Naive thymus-derived CD4-positive, alpha-beta T cell (primary cell): ENCODE measurements at regions of chr15 and their contacts with region 1.

Region 1: GRCh38 chr15:73697033-73697467 is 12.9 kb downstream of the CD276 start:
- DNase-seq: peak; percentile 34 to 80 (median 67)
- ATAC-seq: peak; percentile 93
- H3K4me3 ChIP-seq: no peak overlapping the region
- H3K4me3 Mint-ChIP-seq: peak overlapping the region in 8 of 10 donors; percentile 10 to 61 (median 44)
- H3K27ac ChIP-seq: no peak overlapping the region
- H3K27ac Mint-ChIP-seq: peak overlapping the region in 1 of 9 donors; percentile 74
- H3K4me1 ChIP-seq: peaks cover 8 to 18% of the 10 kb centered on the region in 2 donors
- H3K4me1 Mint-ChIP-seq: peaks cover 13 to 53% (median 18%) of the 10 kb centered on the region in 7 donors
- H3K27me3 ChIP-seq: peaks cover 3 to 8% of the 10 kb centered on the region in 2 donors
- H3K27me3 Mint-ChIP-seq: peaks cover 54 to 69% (median 65%) of the 10 kb centered on the region in 5 donors

Region 2: DNA sequence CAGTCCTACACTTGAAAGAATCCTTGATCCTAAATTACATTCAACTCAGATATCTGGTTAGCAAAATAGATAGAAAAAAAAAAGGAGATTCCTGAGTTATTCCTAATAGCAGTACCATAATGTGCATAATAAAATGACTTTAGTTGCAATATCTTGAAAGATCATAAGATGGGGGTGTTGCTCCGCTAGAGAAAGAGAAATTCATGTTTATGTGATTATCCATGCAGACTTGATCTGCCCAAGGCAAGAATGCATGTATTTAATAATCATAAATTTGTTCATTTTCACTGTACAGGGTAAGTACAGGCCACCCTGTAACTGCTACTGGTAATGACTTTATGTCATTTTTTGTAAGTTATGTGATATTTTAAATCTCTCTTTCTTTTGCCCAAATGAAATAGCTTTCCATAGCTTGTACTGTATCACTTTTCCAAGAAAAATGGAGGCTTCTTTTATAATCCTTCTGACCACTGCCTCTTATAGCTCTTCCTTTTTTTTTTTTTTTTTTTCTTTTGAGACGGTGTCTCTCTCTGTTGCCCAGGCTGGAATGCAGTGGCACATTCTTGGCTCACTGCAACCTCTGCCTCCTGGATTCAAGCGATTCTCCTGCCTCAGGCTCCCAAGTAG is 412.8 kb before region 1 on chr15:
- CTCF ChIA-PET with region 1: no interaction called
- POLR2A ChIA-PET with region 1: no interaction called
- intact Hi-C with region 1: loop called in 1 of 2 experiments (anchors 10 kb)
- DNase-seq: no peak
- ATAC-seq: no peak
- H3K4me3 ChIP-seq: no peak overlapping the region
- H3K4me3 Mint-ChIP-seq: no peak overlapping the region
- H3K27ac ChIP-seq: no peak overlapping the region
- H3K27ac Mint-ChIP-seq: no peak overlapping the region
- H3K4me1 ChIP-seq: no peaks in the 10 kb centered on the region
- H3K4me1 Mint-ChIP-seq: peaks cover 0 to 2% (median 0%) of the 10 kb centered on the region in 7 donors
- H3K27me3 ChIP-seq: no peaks in the 10 kb centered on the region
- H3K27me3 Mint-ChIP-seq: no peaks in the 10 kb centered on the region

Region 3: GRCh38 chr15:73560501-73561117 is 136.4 kb before region 1 on chr15:
- CTCF ChIA-PET with region 1: interaction called, 4 read pairs
- POLR2A ChIA-PET with region 1: no interaction called
- intact Hi-C with region 1: loop called (anchors 1 kb)
- DNase-seq: peak in 6 of 9 donors; percentile 14 to 49 (median 36)
- ATAC-seq: peak; percentile 76
- H3K4me3 ChIP-seq: no peak overlapping the region
- H3K4me3 Mint-ChIP-seq: no peak overlapping the region
- H3K27ac ChIP-seq: no peak overlapping the region
- H3K27ac Mint-ChIP-seq: peak overlapping the region in 1 of 9 donors; percentile 56
- H3K4me1 ChIP-seq: no peaks in the 10 kb centered on the region
- H3K4me1 Mint-ChIP-seq: peaks cover 0 to 8% (median 0%) of the 10 kb centered on the region in 7 donors
- H3K27me3 ChIP-seq: no peaks in the 10 kb centered on the region
- H3K27me3 Mint-ChIP-seq: no peaks in the 10 kb centered on the region

Region 4: DNA sequence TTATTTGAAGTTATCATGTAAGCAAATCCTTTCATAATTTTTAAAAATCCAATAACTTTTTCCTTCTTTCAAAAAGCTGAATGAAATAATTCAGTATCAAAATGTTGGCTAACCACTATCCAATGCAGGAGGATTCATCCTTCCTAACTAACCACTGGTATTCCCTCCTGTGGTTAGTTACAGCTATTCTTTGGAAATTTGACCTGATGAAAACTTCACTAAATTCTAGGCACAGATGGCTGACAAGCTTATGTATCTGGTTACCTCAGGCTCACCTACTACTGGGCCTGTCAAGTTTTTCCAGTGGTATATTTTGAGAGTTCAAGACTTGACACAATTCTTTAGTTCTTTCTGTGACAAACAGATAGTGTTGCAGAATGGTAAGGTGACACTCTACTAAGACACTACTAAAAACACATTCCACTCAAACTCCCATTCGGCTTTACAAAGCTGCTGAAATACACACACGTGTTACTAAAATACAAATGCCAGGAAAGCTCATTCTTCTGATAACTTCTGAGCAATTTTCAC is 79.7 kb before region 1 on chr15:
- CTCF ChIA-PET with region 1: no interaction called
- POLR2A ChIA-PET with region 1: no interaction called
- intact Hi-C with region 1: no loop called
- DNase-seq: no peak
- ATAC-seq: no peak
- H3K4me3 ChIP-seq: no peak overlapping the region
- H3K4me3 Mint-ChIP-seq: no peak overlapping the region
- H3K27ac ChIP-seq: no peak overlapping the region
- H3K27ac Mint-ChIP-seq: no peak overlapping the region
- H3K4me1 ChIP-seq: peaks cover 0 to 5% of the 10 kb centered on the region in 2 donors
- H3K4me1 Mint-ChIP-seq: peaks cover 8 to 80% (median 58%) of the 10 kb centered on the region in 7 donors
- H3K27me3 ChIP-seq: no peaks in the 10 kb centered on the region
- H3K27me3 Mint-ChIP-seq: no peaks in the 10 kb centered on the region

Region 5: DNA sequence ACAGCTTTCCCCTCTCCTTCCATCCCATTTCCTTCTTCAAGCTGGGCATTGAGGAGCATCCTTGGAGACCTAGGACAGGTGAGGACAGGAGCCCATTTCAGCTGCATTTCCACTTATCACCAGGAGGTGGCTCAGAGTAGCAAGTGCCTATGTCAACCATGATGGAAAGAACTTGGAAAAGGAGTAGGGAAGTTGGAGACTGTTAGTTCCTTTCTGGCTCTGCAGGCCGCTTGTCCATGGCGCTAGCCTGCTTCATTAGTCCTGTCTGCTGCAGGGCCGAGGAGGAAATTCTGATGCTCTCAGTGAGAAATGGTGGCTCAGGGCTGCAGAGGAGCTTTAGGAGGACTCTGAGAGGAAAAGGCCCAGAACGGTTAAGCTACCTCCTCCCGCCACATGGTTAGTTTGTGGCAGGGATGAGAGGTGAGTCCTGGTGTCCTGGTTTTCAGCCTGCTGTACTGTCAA is 19.9 kb before region 1 on chr15:
- CTCF ChIA-PET with region 1: interaction called, 60 read pairs
- POLR2A ChIA-PET with region 1: interaction called, 3 read pairs
- intact Hi-C with region 1: loop called (anchors 1 kb)
- DNase-seq: peak in 8 of 9 donors; percentile 14 to 56 (median 44)
- ATAC-seq: no peak
- H3K4me3 ChIP-seq: no peak overlapping the region
- H3K4me3 Mint-ChIP-seq: no peak overlapping the region
- H3K27ac ChIP-seq: no peak overlapping the region
- H3K27ac Mint-ChIP-seq: no peak overlapping the region
- H3K4me1 ChIP-seq: no peaks in the 10 kb centered on the region
- H3K4me1 Mint-ChIP-seq: peaks cover 0 to 9% (median 0%) of the 10 kb centered on the region in 7 donors
- H3K27me3 ChIP-seq: peaks cover 0 to 5% of the 10 kb centered on the region in 2 donors
- H3K27me3 Mint-ChIP-seq: peaks cover 15 to 32% (median 21%) of the 10 kb centered on the region in 5 donors

Region 6: DNA sequence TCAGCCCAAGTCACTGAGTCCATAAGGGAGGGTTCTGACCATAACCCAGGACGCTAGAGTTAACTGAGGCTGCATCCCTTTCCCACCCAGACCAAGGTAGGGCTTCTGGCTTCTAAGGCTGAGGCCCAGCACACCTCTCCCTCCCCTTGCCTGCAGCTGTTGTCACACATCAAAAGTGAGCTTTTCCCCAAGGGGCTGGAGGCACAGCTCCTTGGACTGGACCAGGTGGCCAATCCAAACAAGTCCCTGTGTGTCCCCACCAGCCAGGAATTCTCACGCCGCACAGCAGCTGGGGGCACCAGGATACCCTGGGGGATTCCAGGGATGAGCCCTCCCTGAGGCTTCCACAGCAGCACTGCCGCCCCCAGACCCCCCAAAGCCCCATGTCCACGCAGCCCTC is 411.1 kb after region 1 on chr15:
- CTCF ChIA-PET with region 1: no interaction called
- POLR2A ChIA-PET with region 1: no interaction called
- intact Hi-C with region 1: no loop called
- DNase-seq: no peak
- ATAC-seq: no peak
- H3K4me3 ChIP-seq: no peak overlapping the region
- H3K4me3 Mint-ChIP-seq: no peak overlapping the region
- H3K27ac ChIP-seq: no peak overlapping the region
- H3K27ac Mint-ChIP-seq: no peak overlapping the region
- H3K4me1 ChIP-seq: no peaks in the 10 kb centered on the region
- H3K4me1 Mint-ChIP-seq: no peaks in the 10 kb centered on the region
- H3K27me3 ChIP-seq: no peaks in the 10 kb centered on the region
- H3K27me3 Mint-ChIP-seq: peaks cover 0 to 4% (median 0%) of the 10 kb centered on the region in 5 donors